CD4-positive, alpha-beta memory T cell (primary cell): ENCODE measurements at regions of chr6 and their contacts with region 1.

Region 1: GRCh38 chr6:107847844-107848802 is 24.0 kb upstream of the SCML4 start:
- DNase-seq: peak; percentile 71 to 83 (median 75)
- H3K4me3 ChIP-seq: peak overlapping the region; percentile 57 to 73
- H3K4me3 Mint-ChIP-seq: peak overlapping the region; percentile 79 to 90 (median 85)
- H3K27ac ChIP-seq: peak overlapping the region; percentile 33
- H3K27ac Mint-ChIP-seq: peak overlapping the region; percentile 80 to 90 (median 88)
- H3K4me1 ChIP-seq: peaks cover 22% of the 10 kb centered on the region
- H3K4me1 Mint-ChIP-seq: peaks cover 17 to 43% (median 23%) of the 10 kb centered on the region in 4 donors
- H3K27me3 ChIP-seq: no peaks in the 10 kb centered on the region
- H3K27me3 Mint-ChIP-seq: no peaks in the 10 kb centered on the region

Region 2: GRCh38 chr6:107704347-107705013 is 143.6 kb before region 1 on chr6:
- CTCF ChIA-PET with region 1: interaction called, 56 read pairs
- POLR2A ChIA-PET with region 1: interaction called, 7 read pairs
- intact Hi-C with region 1: loop called (anchors 1 kb)
- DNase-seq: peak in 4 of 5 donors; percentile 26 to 37 (median 30)
- H3K4me3 ChIP-seq: no peak overlapping the region
- H3K4me3 Mint-ChIP-seq: no peak overlapping the region
- H3K27ac ChIP-seq: no peak overlapping the region
- H3K27ac Mint-ChIP-seq: peak overlapping the region; percentile 17 to 87 (median 53)
- H3K4me1 ChIP-seq: peaks cover 14% of the 10 kb centered on the region
- H3K4me1 Mint-ChIP-seq: peaks cover 18 to 44% (median 26%) of the 10 kb centered on the region in 4 donors
- H3K27me3 ChIP-seq: no peaks in the 10 kb centered on the region
- H3K27me3 Mint-ChIP-seq: no peaks in the 10 kb centered on the region

Region 3: GRCh38 chr6:107740496-107741190 is 107.5 kb before region 1 on chr6:
- CTCF ChIA-PET with region 1: interaction called, 51 read pairs
- POLR2A ChIA-PET with region 1: interaction called, 22 read pairs
- intact Hi-C with region 1: no loop called
- DNase-seq: peak in 3 of 5 donors; percentile 33 to 42 (median 39)
- H3K4me3 ChIP-seq: peak overlapping the region; percentile 21 to 60
- H3K4me3 Mint-ChIP-seq: peak overlapping the region; percentile 75 to 91 (median 80)
- H3K27ac ChIP-seq: peak overlapping the region; percentile 63
- H3K27ac Mint-ChIP-seq: peak overlapping the region; percentile 89 to 96 (median 92)
- H3K4me1 ChIP-seq: peaks cover 74% of the 10 kb centered on the region
- H3K4me1 Mint-ChIP-seq: peaks cover 75 to 86% (median 79%) of the 10 kb centered on the region in 4 donors
- H3K27me3 ChIP-seq: no peaks in the 10 kb centered on the region
- H3K27me3 Mint-ChIP-seq: no peaks in the 10 kb centered on the region

Region 4: DNA sequence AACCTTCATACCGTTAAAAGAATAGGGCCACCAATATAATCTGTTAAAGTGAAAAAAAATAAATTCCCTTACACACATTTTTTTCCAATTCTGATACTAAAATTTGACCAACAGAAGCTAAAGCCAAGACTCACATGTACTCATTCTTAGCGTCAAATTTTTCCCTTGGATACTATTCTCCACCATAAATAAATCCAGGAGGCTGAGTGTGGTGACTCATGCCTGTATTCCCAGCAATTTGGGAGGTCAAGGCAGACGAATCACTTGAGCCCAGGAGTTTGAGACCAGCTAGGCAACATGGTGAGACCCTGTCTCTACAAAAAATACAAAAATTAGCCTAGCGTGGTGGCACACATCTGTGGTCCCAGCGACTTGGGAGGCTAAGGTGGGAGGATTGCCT is 67.9 kb before region 1 on chr6:
- CTCF ChIA-PET with region 1: interaction called, 48 read pairs
- POLR2A ChIA-PET with region 1: interaction called, 20 read pairs
- intact Hi-C with region 1: no loop called
- DNase-seq: no peak
- H3K4me3 ChIP-seq: no peak overlapping the region
- H3K4me3 Mint-ChIP-seq: no peak overlapping the region
- H3K27ac ChIP-seq: no peak overlapping the region
- H3K27ac Mint-ChIP-seq: no peak overlapping the region
- H3K4me1 ChIP-seq: peaks cover 35% of the 10 kb centered on the region
- H3K4me1 Mint-ChIP-seq: peaks cover 45 to 76% (median 59%) of the 10 kb centered on the region in 4 donors
- H3K27me3 ChIP-seq: no peaks in the 10 kb centered on the region
- H3K27me3 Mint-ChIP-seq: no peaks in the 10 kb centered on the region

Region 5: DNA sequence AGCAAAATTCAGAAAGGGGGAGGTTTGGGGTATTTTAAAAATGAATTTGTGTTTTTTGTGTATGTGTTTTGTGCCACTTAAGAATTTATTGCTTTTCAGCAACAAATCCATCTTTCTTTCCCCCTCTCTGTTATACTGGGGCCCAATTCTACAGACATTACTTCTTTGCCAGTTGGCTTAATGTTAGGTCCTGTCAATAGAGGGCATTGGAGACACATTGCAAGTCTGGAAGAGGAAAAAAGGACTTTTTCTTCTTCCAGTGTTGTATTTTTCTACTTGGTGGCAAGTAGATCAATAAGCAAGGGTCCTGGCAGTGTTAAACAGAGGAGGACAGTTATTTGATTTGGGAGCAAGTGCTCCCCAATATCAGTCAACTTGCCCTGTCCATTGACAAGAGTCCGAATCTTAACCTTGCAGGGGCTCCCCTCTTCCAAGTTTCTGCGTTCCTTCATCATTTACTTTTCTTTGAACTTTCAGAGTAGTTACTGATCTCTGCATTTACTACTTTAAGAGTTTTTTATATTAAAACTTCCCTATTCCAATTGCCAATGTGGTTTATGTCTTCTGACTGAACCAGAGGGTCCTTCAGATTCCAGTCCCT is 47.5 kb before region 1 on chr6:
- CTCF ChIA-PET with region 1: interaction called, 34 read pairs
- POLR2A ChIA-PET with region 1: interaction called, 9 read pairs
- intact Hi-C with region 1: loop called (anchors 1 kb)
- DNase-seq: peak in 1 of 5 donors; percentile 38
- H3K4me3 ChIP-seq: no peak overlapping the region
- H3K4me3 Mint-ChIP-seq: peak overlapping the region in 1 of 8 donors; percentile 41
- H3K27ac ChIP-seq: no peak overlapping the region
- H3K27ac Mint-ChIP-seq: peak overlapping the region in 6 of 7 donors; percentile 10 to 81 (median 73)
- H3K4me1 ChIP-seq: peaks cover 65% of the 10 kb centered on the region
- H3K4me1 Mint-ChIP-seq: peaks cover 50 to 78% (median 61%) of the 10 kb centered on the region in 4 donors
- H3K27me3 ChIP-seq: no peaks in the 10 kb centered on the region
- H3K27me3 Mint-ChIP-seq: no peaks in the 10 kb centered on the region

Region 6: DNA sequence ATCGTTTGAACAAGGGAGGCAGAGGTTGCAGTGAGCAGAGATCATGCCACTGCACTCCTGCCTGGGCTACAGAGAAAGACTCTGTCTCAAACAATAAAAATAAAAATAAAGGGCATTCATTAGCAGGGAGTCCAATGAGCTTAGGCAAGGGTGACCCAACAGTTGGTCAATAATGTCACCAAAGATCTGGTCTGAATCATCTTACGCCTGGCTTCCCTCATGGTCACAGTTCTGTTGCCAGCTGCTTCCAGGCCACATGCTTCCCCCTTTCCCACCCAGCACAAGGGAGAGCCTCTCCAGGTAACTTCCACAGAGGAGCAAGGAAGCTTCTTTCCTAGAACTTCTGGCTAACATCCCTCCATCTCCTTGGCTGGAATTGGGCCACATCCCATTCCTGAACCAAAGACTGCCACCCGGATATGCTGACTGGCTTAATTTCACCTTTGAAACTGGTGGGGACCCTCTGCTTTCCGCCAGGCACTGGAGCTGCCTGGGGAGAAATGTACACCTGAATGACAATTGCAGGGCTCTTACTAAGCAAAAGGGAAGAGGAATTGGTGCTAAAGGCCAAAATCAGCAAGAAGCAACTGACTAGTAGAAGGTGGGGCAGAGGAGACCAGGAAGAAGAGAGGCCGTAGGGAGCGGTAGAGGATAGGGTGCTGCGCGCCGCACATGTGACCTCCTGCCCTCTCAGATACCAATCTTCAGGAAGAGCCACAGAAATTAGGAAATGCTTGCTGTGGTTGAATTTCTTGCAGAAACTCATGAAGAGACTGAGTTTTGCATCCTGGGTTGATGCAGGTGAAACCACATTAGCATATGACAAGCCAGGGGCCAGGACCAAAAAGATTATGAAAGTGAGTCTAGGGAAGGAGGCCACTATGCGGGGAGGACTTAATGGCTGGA is 15.7 kb before region 1 on chr6:
- CTCF ChIA-PET with region 1: interaction called, 101 read pairs
- POLR2A ChIA-PET with region 1: interaction called, 9 read pairs
- intact Hi-C with region 1: no loop called
- DNase-seq: no peak
- H3K4me3 ChIP-seq: no peak overlapping the region
- H3K4me3 Mint-ChIP-seq: peak overlapping the region; percentile 11 to 73 (median 54)
- H3K27ac ChIP-seq: no peak overlapping the region
- H3K27ac Mint-ChIP-seq: peak overlapping the region; percentile 1 to 82 (median 63)
- H3K4me1 ChIP-seq: peaks cover 22% of the 10 kb centered on the region
- H3K4me1 Mint-ChIP-seq: peaks cover 11 to 42% (median 31%) of the 10 kb centered on the region in 4 donors
- H3K27me3 ChIP-seq: no peaks in the 10 kb centered on the region
- H3K27me3 Mint-ChIP-seq: no peaks in the 10 kb centered on the region